ENCODE measurements at regions of chr6 and their contacts with region 1.

Region 1: DNA sequence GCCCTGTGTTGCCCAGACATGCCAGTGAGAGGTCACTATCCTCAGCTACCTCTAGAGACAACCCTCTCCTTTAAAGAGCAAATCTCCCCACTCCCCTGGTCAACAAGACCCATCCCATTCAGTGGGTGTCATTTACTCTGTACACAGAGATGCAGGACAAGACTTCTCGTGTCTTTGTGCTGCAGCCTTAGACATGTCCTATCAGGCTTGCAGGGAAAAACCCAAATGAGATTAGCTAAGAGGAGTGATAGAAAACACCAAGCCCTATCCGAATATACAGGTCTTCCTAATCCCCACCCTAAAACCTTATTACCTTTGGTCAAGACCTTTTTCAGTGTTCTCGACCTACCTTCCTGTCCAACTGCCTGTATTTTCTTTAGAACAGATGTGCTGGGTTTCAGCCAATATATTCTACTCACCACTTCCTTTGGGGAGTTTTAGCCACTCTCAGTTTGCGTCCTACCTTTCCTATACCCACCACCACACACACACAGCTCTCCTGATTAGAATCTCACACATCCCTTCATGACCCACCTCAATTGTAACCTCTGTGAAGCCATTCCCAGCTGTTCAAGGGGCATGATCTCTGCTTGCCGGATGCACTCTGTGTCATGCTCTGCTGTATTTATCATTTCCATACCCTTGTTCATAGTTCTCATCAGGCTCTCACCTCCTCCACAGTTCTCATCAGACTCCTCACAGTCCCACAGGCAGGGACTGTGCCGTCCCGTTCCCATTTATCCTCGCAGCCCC is 39.7 kb downstream of the TRAM2 start:
- DNase-seq: peak; percentile 77
- H3K4me3 ChIP-seq: no peak overlapping the region
- H3K27ac ChIP-seq: peak overlapping the region; percentile 24
- H3K4me1 ChIP-seq: peaks cover 53% of the 10 kb centered on the region
- H3K27me3 ChIP-seq: no peaks in the 10 kb centered on the region
- CTCF ChIP-seq: no peak

Region 2: GRCh38 chr6:52385074-52385473 is 152.1 kb before region 1 on chr6:
- CTCF ChIA-PET with region 1: no interaction called
- dilution Hi-C with region 1: no loop called
- in situ Hi-C with region 1: no loop called
- intact Hi-C with region 1: no loop called
- DNase-seq: no peak
- H3K4me3 ChIP-seq: no peak overlapping the region
- H3K27ac ChIP-seq: no peak overlapping the region
- H3K4me1 ChIP-seq: peaks cover 7% of the 10 kb centered on the region
- H3K27me3 ChIP-seq: no peaks in the 10 kb centered on the region
- CTCF ChIP-seq: no peak

Region 3: DNA sequence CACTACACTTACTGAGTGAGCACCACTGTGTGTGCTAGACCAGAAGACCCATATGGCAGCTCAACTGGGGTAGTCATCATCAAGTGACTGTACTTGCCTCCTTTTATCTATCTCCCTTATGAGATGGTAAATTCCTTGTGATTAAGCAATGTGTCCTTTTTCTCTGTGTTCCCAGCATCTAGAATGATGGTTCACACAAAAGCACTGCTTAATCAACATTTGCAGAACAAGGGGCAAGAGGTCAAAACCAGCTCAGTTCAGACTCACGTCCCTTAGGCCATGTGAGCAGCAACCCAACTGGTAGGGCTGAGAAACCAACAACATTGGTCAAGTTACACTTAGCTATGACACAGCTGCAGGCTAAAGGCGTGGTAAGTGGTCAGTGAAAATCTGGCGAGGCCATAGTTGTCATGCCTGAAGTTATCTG is 29.7 kb after region 1 on chr6:
- CTCF ChIA-PET with region 1: no interaction called
- dilution Hi-C with region 1: no loop called
- in situ Hi-C with region 1: no loop called
- intact Hi-C with region 1: loop called (anchors 2 kb)
- DNase-seq: peak; percentile 89
- H3K4me3 ChIP-seq: no peak overlapping the region
- H3K27ac ChIP-seq: peak overlapping the region; percentile 30
- H3K4me1 ChIP-seq: peaks cover 17% of the 10 kb centered on the region
- H3K27me3 ChIP-seq: no peaks in the 10 kb centered on the region
- CTCF ChIP-seq: no peak

Measured in mammary epithelial cell (primary cell).